ENCODE measurements at regions of chr11 and their contacts with region 1.

Region 1: GRCh38 chr11:117807482-117808327 is 10.7 kb upstream of the DSCAML1 start:
- DNase-seq: no peak
- H3K4me3 ChIP-seq: no peak overlapping the region
- CTCF ChIP-seq: peak; percentile 82

Region 2: DNA sequence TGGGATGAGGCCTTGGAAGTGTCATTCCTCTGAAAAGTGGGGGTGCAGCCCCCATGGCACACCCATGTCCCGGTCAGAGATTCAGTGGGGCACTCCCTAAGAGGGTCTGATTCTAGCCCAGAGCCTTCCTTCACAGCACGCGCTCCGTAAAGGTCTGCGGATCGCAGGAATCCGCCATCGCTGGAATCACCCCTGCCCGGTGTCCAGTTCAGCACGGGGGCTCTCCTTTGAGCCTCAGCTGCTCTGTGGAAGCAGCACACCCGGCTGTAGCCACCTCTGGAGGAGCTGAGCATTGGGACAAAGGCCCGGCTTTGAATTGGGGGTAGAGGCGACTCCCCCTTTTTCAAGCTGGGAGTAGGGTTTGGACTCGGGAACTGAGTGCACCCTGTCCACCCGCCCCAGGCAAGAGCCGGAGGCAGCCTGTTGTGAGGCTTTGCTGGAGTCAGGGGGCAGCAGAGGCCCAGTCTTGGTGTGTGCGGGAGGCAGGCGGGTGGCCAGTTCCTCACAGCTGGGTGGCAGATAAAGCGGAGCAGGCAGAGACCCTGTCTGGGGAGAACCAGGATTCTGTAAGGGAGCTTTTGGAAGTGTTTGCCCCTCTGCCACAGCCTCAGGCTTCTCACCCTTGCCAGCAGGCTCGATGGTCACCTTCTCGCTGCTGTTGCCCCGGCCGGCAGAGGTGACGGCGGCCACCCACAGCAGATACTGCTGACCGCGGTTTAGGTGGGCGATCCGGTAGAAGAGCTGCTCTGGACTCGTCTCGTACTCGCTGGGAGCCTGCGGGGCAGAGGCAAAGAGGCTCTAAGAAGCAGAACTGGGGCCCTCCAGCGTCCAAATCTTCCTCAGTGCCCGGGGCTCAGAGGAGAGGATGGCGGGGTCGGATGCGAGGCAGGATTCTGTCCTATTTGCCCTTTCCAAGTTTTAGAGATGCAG is 364.2 kb before region 1 on chr11:
- CTCF ChIA-PET with region 1: interaction called, 11 read pairs
- POLR2A ChIA-PET with region 1: no interaction called
- DNase-seq: no peak
- H3K4me3 ChIP-seq: no peak overlapping the region
- CTCF ChIP-seq: peak; percentile 62

Region 3: GRCh38 chr11:117796872-117797529 is 10.7 kb before region 1 on chr11 and contains the start of gene DSCAML1:
- CTCF ChIA-PET with region 1: interaction called, 33 read pairs
- POLR2A ChIA-PET with region 1: no interaction called
- DNase-seq: no peak
- H3K4me3 ChIP-seq: no peak within 1 kb of the TSS
- CTCF ChIP-seq: no peak

Region 4: GRCh38 chr11:117941163-117941707 is 133.5 kb after region 1 on chr11:
- CTCF ChIA-PET with region 1: interaction called, 144 read pairs
- POLR2A ChIA-PET with region 1: no interaction called
- DNase-seq: no peak
- H3K4me3 ChIP-seq: no peak overlapping the region
- CTCF ChIP-seq: no peak

Region 5: GRCh38 chr11:118051611-118052461 is 244.1 kb after region 1 on chr11:
- CTCF ChIA-PET with region 1: interaction called, 48 read pairs
- POLR2A ChIA-PET with region 1: no interaction called
- DNase-seq: no peak
- H3K4me3 ChIP-seq: no peak overlapping the region
- CTCF ChIP-seq: no peak

Measured in AG04449 (cell line).